Colonic mucosa (tissue), 4 donors: ENCODE measurements at regions of chr1 and their contacts with region 1.

Region 1: DNA sequence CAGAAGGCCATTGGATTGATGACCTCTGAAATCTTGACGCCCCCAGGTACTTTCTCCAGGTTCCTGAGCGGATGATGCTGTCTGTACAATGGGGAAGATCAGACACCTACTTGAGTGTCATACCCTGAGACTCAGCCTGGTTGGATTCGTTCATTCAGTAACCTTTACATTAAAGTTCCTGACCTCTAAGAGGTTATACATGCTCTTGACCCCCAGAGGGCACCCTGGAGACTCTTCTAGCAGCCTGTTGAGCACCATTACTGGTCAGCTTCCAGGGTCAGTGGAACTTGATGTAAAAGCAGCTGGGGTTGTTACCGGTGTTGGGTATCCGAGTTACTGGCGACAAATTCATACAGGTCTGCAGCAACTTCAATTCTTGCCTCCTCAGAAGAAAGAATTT is 114.3 kb upstream of the ZNF678 start:
- DNase-seq: no peak
- H3K4me3 ChIP-seq: no peak overlapping the region
- H3K27ac ChIP-seq: no peak overlapping the region
- H3K4me1 ChIP-seq: no peaks in the 10 kb centered on the region
- H3K27me3 ChIP-seq: no peaks in the 10 kb centered on the region
- CTCF ChIP-seq: no peak

Region 2: DNA sequence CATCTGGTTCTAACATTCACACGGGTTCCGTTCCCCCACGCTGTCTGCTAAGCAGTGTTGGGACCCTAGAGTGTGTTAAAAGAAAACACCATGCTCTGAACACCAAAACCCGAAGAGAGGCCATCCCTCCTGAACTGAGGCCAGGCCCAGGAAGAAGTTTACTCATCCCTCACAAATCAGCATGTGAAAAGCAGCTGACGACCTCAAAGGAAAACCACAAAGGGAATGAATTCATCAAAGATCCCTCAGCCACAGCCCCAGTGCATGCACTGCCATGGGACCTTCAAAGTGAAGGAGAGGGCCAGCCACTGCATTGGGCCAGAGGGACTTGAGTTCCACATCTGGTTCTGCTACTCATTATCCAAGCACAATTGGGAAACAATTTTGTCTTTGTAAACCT is 585.6 kb before region 1 on chr1:
- intact Hi-C with region 1: no loop called
- DNase-seq: no peak
- H3K4me3 ChIP-seq: no peak overlapping the region
- H3K27ac ChIP-seq: no peak overlapping the region
- H3K4me1 ChIP-seq: no peaks in the 10 kb centered on the region
- H3K27me3 ChIP-seq: no peaks in the 10 kb centered on the region
- CTCF ChIP-seq: no peak

Region 3: GRCh38 chr1:227127891-227128290 is 321.2 kb before region 1 on chr1:
- intact Hi-C with region 1: loop called (anchors 10 kb)
- DNase-seq: no peak
- H3K4me3 ChIP-seq: no peak overlapping the region
- H3K27ac ChIP-seq: no peak overlapping the region
- H3K4me1 ChIP-seq: no peaks in the 10 kb centered on the region
- H3K27me3 ChIP-seq: no peaks in the 10 kb centered on the region
- CTCF ChIP-seq: no peak

Region 4: GRCh38 chr1:227396539-227397353 is 52.3 kb before region 1 on chr1:
- intact Hi-C with region 1: no loop called
- DNase-seq: no peak
- H3K4me3 ChIP-seq: no peak overlapping the region
- H3K27ac ChIP-seq: no peak overlapping the region
- H3K4me1 ChIP-seq: no peaks in the 10 kb centered on the region
- H3K27me3 ChIP-seq: no peaks in the 10 kb centered on the region
- CTCF ChIP-seq: no peak